Caco-2 (cell line): ENCODE measurements at regions of chr7 and their contacts with region 1.

Region 1: GRCh38 chr7:23055582-23056178 is 41.8 kb upstream of the HYCC1 start:
- DNase-seq: peak; percentile 63 to 74
- H3K4me3 ChIP-seq: no peak overlapping the region
- H3K4me3 Mint-ChIP-seq: no peak overlapping the region
- H3K27ac Mint-ChIP-seq: no peak overlapping the region
- H3K4me1 ChIP-seq: peaks cover 10% of the 10 kb centered on the region; the same call in 1 of the 2 replicates
- H3K4me1 Mint-ChIP-seq: peaks cover 24% of the 10 kb centered on the region
- H3K27me3 ChIP-seq: no peaks in the 10 kb centered on the region
- H3K27me3 Mint-ChIP-seq: no peaks in the 10 kb centered on the region
- CTCF ChIP-seq: peak; percentile 86 to 91

Region 2: DNA sequence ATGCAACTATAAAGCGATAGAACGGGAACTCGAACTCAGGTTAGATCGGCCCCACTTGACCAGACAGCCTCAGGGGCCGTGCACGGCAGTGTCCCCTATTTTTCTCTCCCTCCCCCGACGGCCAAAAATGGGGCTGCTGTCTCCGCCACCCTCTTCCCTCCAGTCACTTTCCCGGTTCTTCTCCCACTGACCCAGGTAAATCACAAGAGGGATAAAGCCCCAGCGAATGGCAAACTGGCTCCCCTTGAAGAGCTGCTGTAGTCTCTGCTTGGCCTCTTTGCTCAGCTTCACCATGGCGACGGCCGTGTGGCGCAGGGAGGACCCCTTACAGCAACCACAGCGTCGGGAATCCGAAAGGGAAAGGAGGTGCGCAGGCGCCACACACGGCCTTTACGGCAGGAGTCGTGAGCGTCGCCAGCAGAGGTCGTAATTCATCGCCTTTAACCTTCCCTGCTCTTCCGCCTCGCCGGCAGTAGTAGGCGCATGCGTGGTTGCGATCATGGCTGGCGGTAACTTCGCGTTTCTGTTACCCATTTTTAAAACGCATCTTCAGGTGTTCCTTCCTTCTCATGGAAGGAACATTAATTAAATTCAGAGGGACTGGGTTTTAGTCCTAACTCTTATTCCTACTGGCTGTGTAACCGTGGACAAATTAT is 233.1 kb before region 1 on chr7 and contains the start of gene TOMM7:
- CTCF ChIA-PET with region 1: no interaction called
- POLR2A ChIA-PET with region 1: no interaction called
- intact Hi-C with region 1: loop called (anchors 5 kb)
- DNase-seq: peak; percentile 92 to 95
- H3K4me3 ChIP-seq: peak within 1 kb of the TSS; percentile 89
- H3K4me3 Mint-ChIP-seq: peak within 1 kb of the TSS; percentile 95
- H3K27ac Mint-ChIP-seq: peak within 1 kb of the TSS; percentile 98
- H3K4me1 ChIP-seq: peaks cover 8% of the 10 kb centered on the region; the same call in 1 of the 2 replicates
- H3K4me1 Mint-ChIP-seq: peaks cover 23% of the 10 kb centered on the region
- H3K27me3 ChIP-seq: no peaks in the 10 kb centered on the region
- H3K27me3 Mint-ChIP-seq: no peaks in the 10 kb centered on the region
- CTCF ChIP-seq: peak in 1 of 2 experiments; percentile 28
- total RNA-seq, gene TOMM7: 192 and 220 TPM in 2 replicates

Region 3: GRCh38 chr7:22860784-22861482 is 194.7 kb before region 1 on chr7:
- CTCF ChIA-PET with region 1: no interaction called
- POLR2A ChIA-PET with region 1: no interaction called
- intact Hi-C with region 1: loop called (anchors 5 kb)
- DNase-seq: peak in 1 of 2 experiments; percentile 44
- H3K4me3 ChIP-seq: no peak overlapping the region
- H3K4me3 Mint-ChIP-seq: no peak overlapping the region
- H3K27ac Mint-ChIP-seq: no peak overlapping the region
- H3K4me1 ChIP-seq: peaks cover 6% of the 10 kb centered on the region
- H3K4me1 Mint-ChIP-seq: peaks cover 7% of the 10 kb centered on the region
- H3K27me3 ChIP-seq: no peaks in the 10 kb centered on the region
- H3K27me3 Mint-ChIP-seq: no peaks in the 10 kb centered on the region
- CTCF ChIP-seq: peak; percentile 56 to 68

Region 4: DNA sequence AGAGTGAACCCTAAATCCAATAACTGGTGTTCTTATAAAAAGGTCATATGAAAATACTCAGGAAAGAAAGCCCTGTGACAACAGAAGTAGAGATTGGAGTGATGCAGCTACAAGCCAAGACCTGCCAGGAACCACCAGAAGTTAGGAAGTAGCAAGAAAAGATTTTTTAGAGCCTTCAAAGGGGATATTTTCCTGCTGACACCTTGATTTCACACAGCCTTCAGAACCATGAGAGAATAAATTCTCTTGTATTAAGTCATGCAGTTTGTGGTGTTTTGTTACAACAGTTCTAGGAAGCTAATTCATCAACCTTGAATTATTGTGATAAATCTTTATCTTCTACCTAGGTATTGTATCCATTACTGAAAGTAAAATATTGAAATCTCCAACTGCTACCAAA is 122.8 kb before region 1 on chr7:
- CTCF ChIA-PET with region 1: interaction called, 3 read pairs
- POLR2A ChIA-PET with region 1: no interaction called
- intact Hi-C with region 1: loop called (anchors 2 kb)
- DNase-seq: no peak
- H3K4me3 ChIP-seq: no peak overlapping the region
- H3K4me3 Mint-ChIP-seq: no peak overlapping the region
- H3K27ac Mint-ChIP-seq: no peak overlapping the region
- H3K4me1 ChIP-seq: peaks cover 9% of the 10 kb centered on the region; the same call in 1 of the 2 replicates
- H3K4me1 Mint-ChIP-seq: no peaks in the 10 kb centered on the region
- H3K27me3 ChIP-seq: no peaks in the 10 kb centered on the region
- H3K27me3 Mint-ChIP-seq: no peaks in the 10 kb centered on the region
- CTCF ChIP-seq: no peak

Region 5: GRCh38 chr7:23013715-23014649 is 41.7 kb before region 1 on chr7 and contains the start of gene HYCC1:
- CTCF ChIA-PET with region 1: interaction called, 6 read pairs
- POLR2A ChIA-PET with region 1: no interaction called
- intact Hi-C with region 1: loop called (anchors 1 kb)
- DNase-seq: peak; percentile 99
- H3K4me3 ChIP-seq: peak within 1 kb of the TSS; percentile 93
- H3K4me3 Mint-ChIP-seq: no peak within 1 kb of the TSS
- H3K27ac Mint-ChIP-seq: no peak within 1 kb of the TSS
- H3K4me1 ChIP-seq: peaks cover 6% of the 10 kb centered on the region; the same call in 1 of the 2 replicates
- H3K4me1 Mint-ChIP-seq: peaks cover 12% of the 10 kb centered on the region
- H3K27me3 ChIP-seq: no peaks in the 10 kb centered on the region
- H3K27me3 Mint-ChIP-seq: no peaks in the 10 kb centered on the region
- CTCF ChIP-seq: peak; percentile 52 to 65
- total RNA-seq, gene HYCC1: 43.4 and 46.2 TPM in 2 replicates